Activated T-helper 2 cell treated with anti-CD3 and anti-CD28 coated beads, Interferon-gamma antibody, Interleukin-2, Interleukin-4, amounts not matched to agents 10 μg/mL and 5 μg/mL and 100 μg/mL, durations not matched to agents 14 hours and 24 hours and 36 hours (primary cell): ENCODE measurements at regions of chr3 and their contacts with region 1.

Region 1: DNA sequence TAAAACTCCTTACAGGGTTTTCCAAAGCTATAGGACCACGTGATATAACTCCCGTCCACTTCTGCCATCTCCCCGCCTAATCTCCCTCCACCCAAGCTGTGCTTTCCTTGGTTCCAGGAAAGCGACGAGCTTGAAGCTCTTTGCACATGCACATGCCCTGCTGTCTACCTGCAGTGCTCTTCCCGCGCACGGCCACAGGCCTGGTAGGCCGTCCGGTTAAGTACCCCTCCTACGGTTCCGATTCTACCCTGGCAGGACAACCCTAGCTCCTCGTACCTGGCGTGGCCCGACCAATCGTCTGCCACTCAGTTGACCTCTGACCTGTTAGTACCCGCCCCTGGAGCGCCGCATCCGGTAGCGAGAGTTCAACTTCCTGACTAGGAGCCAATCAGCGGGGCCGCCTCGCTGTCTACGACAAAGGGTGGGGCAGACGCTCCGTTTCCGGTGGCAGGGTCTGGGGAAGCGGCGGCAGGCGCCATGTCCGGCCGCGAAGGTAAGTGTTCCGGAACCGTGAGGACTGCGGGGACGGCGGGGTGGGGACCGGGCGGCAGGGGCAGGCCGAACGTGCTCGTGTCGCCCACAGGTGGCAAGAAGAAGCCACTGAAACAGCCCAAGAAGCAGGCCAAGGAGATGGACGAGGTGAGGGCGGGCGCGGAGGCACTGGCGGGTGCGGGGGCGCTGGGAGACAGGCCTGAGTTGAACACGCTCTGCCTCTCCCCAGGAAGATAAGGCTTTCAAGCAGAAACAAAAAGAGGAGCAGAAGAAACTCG is at the starts of genes CCDC51 and TMA7:
- DNase-seq: peak; percentile 98
- H3K4me3 Mint-ChIP-seq: peak within 1 kb of the TSS; percentile 97
- H3K27ac Mint-ChIP-seq: peak within 1 kb of the TSS; percentile 90
- H3K4me1 Mint-ChIP-seq: peaks cover 20% of the 10 kb centered on the region
- H3K27me3 Mint-ChIP-seq: no peaks in the 10 kb centered on the region
- total RNA-seq, gene CCDC51: 22.2 and 23.7 TPM in 2 replicates
- total RNA-seq, gene TMA7: 270 and 289 TPM in 2 replicates

Region 2: GRCh38 chr3:48188266-48189201 is 251.5 kb before region 1 on chr3 and contains the start of gene CDC25A:
- intact Hi-C with region 1: loop called (anchors 5 kb)
- DNase-seq: peak; percentile 97
- H3K4me3 Mint-ChIP-seq: peak within 1 kb of the TSS; percentile 92
- H3K27ac Mint-ChIP-seq: peak within 1 kb of the TSS; percentile 86
- H3K4me1 Mint-ChIP-seq: peaks cover 23% of the 10 kb centered on the region
- H3K27me3 Mint-ChIP-seq: no peaks in the 10 kb centered on the region
- total RNA-seq, gene CDC25A: 39.1 and 40.5 TPM in 2 replicates

Region 3: GRCh38 chr3:48232734-48233133 is 207.3 kb before region 1 on chr3:
- intact Hi-C with region 1: loop called (anchors 1 kb)
- DNase-seq: peak; percentile 45
- H3K4me3 Mint-ChIP-seq: no peak overlapping the region
- H3K27ac Mint-ChIP-seq: no peak overlapping the region
- H3K4me1 Mint-ChIP-seq: peaks cover 5% of the 10 kb centered on the region
- H3K27me3 Mint-ChIP-seq: peaks cover 2% of the 10 kb centered on the region

Region 4: GRCh38 chr3:48268381-48269183 is 171.4 kb before region 1 on chr3:
- intact Hi-C with region 1: loop called (anchors 1 kb)
- DNase-seq: peak; percentile 71
- H3K4me3 Mint-ChIP-seq: peak overlapping the region; percentile 58
- H3K27ac Mint-ChIP-seq: peak overlapping the region; percentile 94
- H3K4me1 Mint-ChIP-seq: peaks cover 41% of the 10 kb centered on the region
- H3K27me3 Mint-ChIP-seq: no peaks in the 10 kb centered on the region

Region 5: DNA sequence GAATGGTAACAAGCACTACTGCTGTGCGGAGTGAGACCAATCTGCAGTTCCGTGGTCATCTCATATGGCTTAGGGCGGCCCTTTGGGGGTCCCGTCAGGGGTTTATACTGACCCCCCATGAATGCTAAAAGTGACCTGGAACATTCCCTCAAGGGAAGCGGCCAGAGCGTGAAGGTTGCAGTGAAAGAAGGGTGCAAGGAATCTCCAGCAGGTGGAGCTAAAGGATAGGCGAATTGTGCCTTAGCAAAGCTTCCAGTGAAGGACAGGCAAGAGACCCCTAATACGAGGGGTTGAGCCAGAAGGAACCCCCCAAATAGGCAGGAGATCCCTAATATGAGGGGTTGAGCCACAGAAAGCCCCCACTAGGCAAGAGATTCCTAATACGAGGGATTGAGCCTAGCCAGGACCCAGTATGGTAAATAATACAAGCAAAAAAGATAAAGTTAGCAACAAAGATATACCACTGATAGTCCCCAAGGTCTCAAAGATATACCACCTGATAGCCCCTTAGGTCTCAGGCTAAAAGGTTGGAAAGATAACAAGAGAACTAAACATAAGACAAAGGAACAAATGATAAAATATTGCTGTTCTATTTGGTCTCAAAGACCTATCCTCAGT is 166.3 kb before region 1 on chr3:
- intact Hi-C with region 1: loop called (anchors 1 kb)
- DNase-seq: peak; percentile 24
- H3K4me3 Mint-ChIP-seq: no peak overlapping the region
- H3K27ac Mint-ChIP-seq: no peak overlapping the region
- H3K4me1 Mint-ChIP-seq: peaks cover 22% of the 10 kb centered on the region
- H3K27me3 Mint-ChIP-seq: no peaks in the 10 kb centered on the region

Region 6: DNA sequence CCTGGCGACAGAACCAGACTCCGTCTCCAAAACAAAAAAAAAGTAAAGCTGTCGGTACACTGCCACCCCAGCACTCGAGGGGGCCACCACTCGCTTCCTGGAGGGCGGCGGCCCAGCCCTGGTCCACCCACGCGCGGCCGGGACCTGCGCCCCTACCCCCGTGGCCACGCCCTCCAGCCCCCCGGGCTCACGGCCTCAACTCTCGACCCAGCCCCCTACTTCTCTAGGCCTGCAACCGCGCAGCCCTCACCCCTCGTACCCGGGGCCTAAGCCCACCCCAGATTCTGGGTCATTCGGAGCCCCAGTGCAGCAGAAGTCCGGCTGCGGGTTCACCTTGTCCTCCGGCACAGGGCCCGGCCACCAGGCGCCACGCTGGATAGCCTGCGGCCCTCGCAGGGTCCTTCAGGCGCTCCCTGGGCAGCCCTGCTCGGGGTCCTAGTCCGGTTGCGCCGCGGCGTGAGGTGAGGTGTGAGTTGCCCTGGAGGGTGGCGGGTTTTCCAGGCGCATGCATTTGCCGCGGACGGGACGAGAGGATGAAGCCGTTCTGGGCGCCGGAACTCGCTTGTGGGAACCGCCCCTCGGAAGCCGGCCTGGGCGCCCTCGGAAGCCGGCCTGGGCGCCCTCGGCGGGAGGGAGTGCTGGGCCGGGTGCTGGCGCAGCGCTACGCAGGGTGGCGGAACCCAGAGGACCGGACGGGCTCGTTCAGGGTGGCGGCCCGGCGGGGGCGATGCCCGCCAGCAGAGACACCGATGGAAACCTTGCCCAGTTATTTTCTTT is 138.8 kb before region 1 on chr3:
- intact Hi-C with region 1: loop called (anchors 1 kb)
- DNase-seq: peak; percentile 87
- H3K4me3 Mint-ChIP-seq: peak within 1 kb of the TSS; percentile 95
- H3K27ac Mint-ChIP-seq: peak within 1 kb of the TSS; percentile 98
- H3K4me1 Mint-ChIP-seq: peaks cover 26% of the 10 kb centered on the region
- H3K27me3 Mint-ChIP-seq: peaks cover 13% of the 10 kb centered on the region

Region 7: DNA sequence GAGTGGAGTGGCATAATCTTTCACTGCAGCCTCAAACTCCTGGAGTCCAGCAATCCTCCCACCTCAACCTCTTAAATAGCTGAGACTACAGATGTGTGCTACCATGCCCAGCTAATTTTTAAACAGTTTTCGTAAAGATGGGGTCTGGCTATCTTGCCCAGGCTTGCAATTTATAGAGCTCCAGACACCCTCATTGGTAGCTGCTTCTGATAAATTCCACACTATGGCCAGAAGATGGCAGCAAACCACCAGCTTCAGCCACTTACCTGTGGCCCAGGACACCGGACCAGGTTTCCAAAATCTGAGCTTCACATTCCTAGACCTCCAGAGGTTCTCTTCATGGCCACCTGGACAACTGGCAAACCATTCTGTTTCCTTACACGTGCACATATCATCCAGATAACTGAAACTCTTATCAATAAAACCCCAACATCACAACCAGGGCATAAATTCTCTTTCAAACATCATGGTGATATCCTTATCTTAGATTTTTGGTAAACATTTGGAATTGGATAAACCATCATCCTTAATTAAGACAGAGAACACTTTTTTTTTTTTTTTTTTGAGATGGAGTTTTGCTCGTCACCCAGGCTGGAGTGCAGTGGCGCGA is 39.1 kb before region 1 on chr3:
- intact Hi-C with region 1: loop called (anchors 1 kb)
- DNase-seq: peak; percentile 41
- H3K4me3 Mint-ChIP-seq: no peak overlapping the region
- H3K27ac Mint-ChIP-seq: no peak overlapping the region
- H3K4me1 Mint-ChIP-seq: no peaks in the 10 kb centered on the region
- H3K27me3 Mint-ChIP-seq: no peaks in the 10 kb centered on the region